GM12878 (cell line): ENCODE measurements at regions of chr13 and their contacts with region 1.

Region 1: DNA sequence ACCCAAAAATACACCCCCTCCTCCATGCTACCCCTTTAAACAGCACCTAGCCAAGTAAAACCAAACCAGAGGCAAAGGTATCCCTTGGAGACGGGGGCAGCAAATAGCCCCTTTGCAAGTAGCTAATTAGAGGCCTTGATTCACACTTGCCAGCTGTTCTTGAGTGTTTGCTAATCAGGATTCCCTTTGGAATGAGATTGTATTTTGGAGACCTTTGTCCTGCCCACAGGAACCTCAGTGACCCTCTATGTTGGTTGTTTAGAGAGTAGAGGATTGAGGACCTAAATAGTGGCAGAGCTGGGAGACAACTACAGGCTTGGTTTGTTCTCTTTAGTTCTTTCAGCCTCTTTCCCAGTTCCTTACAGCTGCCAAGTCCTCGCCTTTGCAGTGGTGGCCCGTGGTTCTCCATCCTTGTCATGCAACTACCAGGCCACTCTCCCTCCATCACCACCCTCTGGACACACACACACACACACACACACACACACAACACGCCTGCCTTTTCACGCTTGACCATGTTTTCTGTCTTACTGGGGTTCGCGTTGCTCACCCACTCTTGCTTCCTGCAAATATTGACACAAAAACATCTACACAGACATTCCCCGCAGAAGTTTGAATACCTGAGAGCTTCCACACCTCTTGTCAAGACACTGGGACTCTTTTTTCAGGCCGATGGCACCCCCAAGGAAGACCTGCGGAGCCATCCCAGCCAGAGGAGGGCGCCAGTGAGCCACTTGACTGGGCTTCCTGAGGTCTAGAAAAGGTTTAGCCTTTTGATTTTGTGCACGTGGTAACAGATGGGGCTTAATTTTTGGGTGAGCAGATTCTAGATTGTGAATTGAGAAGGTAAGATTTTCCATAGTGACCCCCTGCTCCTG is 80.0 kb upstream of the GPR183 start:
- DNase-seq: peak; percentile 66
- ATAC-seq: peak; percentile 93
- H3K4me3 ChIP-seq: no peak overlapping the region
- H3K27ac ChIP-seq: peak overlapping the region; percentile 41; the same call in 1 of the 2 replicates
- H3K4me1 ChIP-seq: peaks cover 26% of the 10 kb centered on the region
- H3K27me3 ChIP-seq: no peaks in the 10 kb centered on the region
- CTCF ChIP-seq: peak; percentile 95 to 99 (median 96)
- EP300 ChIP-seq: no peak
- POLR2A ChIP-seq: no peak
- RAD21 ChIP-seq: peak; percentile 99

Region 2: GRCh38 chr13:99176309-99177276 is 210.6 kb before region 1 on chr13:
- CTCF ChIA-PET with region 1: interaction called, 17 read pairs
- POLR2A ChIA-PET with region 1: no interaction called
- RAD21 ChIA-PET with region 1: no interaction called
- SMC1A ChIA-PET with region 1: interaction called, 8 read pairs
- in situ Hi-C with region 1: no loop called
- intact Hi-C with region 1: loop called (anchors 2 kb)
- DNase-seq: no peak
- ATAC-seq: peak; percentile 96
- H3K4me3 ChIP-seq: no peak overlapping the region
- H3K27ac ChIP-seq: no peak overlapping the region
- H3K4me1 ChIP-seq: peaks cover 4% of the 10 kb centered on the region
- H3K27me3 ChIP-seq: peaks cover 0 to 2% of the 10 kb centered on the region in 2 experiments; a peak in 1 of 4 replicates
- CTCF ChIP-seq: peak; percentile 84 to 96 (median 93)
- EP300 ChIP-seq: no peak
- POLR2A ChIP-seq: no peak
- RAD21 ChIP-seq: peak; percentile 99

Region 3: GRCh38 chr13:99307648-99308339 is 79.4 kb before region 1 on chr13:
- CTCF ChIA-PET with region 1: interaction called, 21 read pairs
- POLR2A ChIA-PET with region 1: no interaction called
- RAD21 ChIA-PET with region 1: interaction called, 13 read pairs
- SMC1A ChIA-PET with region 1: interaction called, 21 read pairs
- in situ Hi-C with region 1: no loop called
- intact Hi-C with region 1: no loop called
- DNase-seq: no peak
- ATAC-seq: peak; percentile 50
- H3K4me3 ChIP-seq: peak overlapping the region; percentile 98
- H3K27ac ChIP-seq: peak overlapping the region; percentile 93
- H3K4me1 ChIP-seq: peaks cover 49% of the 10 kb centered on the region
- H3K27me3 ChIP-seq: no peaks in the 10 kb centered on the region
- CTCF ChIP-seq: no peak
- EP300 ChIP-seq: no peak
- POLR2A ChIP-seq: no peak; the same call in 1 of the 2 replicates
- RAD21 ChIP-seq: no peak

Region 4: GRCh38 chr13:99366075-99366987 is 20.8 kb before region 1 on chr13:
- CTCF ChIA-PET with region 1: interaction called, 40 read pairs
- POLR2A ChIA-PET with region 1: interaction called, 12 read pairs
- RAD21 ChIA-PET with region 1: interaction called, 46 read pairs
- SMC1A ChIA-PET with region 1: interaction called, 148 read pairs
- in situ Hi-C with region 1: no loop called
- intact Hi-C with region 1: no loop called
- DNase-seq: peak; percentile 87
- ATAC-seq: peak; percentile 67
- H3K4me3 ChIP-seq: peak overlapping the region; percentile 23; the same call in 1 of the 2 replicates
- H3K27ac ChIP-seq: peak overlapping the region; percentile 93
- H3K4me1 ChIP-seq: peaks cover 54% of the 10 kb centered on the region
- H3K27me3 ChIP-seq: no peaks in the 10 kb centered on the region
- CTCF ChIP-seq: no peak
- EP300 ChIP-seq: peak; percentile 51 to 78; a peak in 1 of 4 replicates
- POLR2A ChIP-seq: 0 out of 2 replicates have a peak, but pooled peaks have one; percentile 19
- RAD21 ChIP-seq: peak; percentile 5; the same call in 1 of the 2 replicates

Region 5: GRCh38 chr13:99417201-99418102 is 30.3 kb after region 1 on chr13:
- CTCF ChIA-PET with region 1: interaction called, 55 read pairs
- POLR2A ChIA-PET with region 1: interaction called, 3 read pairs
- RAD21 ChIA-PET with region 1: interaction called, 22 read pairs
- SMC1A ChIA-PET with region 1: interaction called, 51 read pairs
- in situ Hi-C with region 1: no loop called
- intact Hi-C with region 1: no loop called
- DNase-seq: no peak
- ATAC-seq: no peak
- H3K4me3 ChIP-seq: no peak overlapping the region
- H3K27ac ChIP-seq: no peak overlapping the region
- H3K4me1 ChIP-seq: peaks cover 40% of the 10 kb centered on the region
- H3K27me3 ChIP-seq: no peaks in the 10 kb centered on the region
- CTCF ChIP-seq: no peak
- EP300 ChIP-seq: no peak
- POLR2A ChIP-seq: no peak
- RAD21 ChIP-seq: no peak

Region 6: DNA sequence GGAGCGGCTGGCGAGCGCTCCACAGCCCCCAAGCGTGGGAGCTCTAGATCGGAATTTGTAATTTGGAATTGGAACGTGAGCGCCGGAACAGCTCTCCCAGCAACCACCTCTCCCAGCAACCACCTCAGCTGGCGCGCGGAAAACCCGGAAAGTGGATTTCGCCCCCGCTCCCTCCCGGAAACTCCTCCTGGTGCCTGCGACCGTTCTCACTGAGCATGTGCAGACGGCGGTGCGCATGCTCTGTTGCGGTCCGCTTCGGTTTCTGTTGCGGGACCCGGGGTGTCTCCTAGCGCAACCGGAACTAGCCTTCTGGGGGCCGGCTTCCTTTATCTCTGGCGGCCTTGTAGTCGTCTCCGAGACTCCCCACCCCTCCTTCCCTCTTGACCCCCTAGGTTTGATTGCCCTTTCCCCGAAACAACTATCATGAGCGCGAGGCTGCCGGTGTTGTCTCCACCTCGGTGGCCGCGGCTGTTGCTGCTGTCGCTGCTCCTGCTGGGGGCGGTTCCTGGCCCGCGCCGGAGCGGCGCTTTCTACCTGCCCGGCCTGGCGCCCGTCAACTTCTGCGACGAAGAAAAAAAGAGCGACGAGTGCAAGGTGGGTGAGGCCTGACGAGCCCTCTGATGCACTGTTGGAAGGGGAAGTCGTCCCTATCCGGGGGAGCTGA is 114.2 kb after region 1 on chr13 and contains the start of gene TM9SF2:
- CTCF ChIA-PET with region 1: interaction called, 19 read pairs
- POLR2A ChIA-PET with region 1: interaction called, 3 read pairs
- RAD21 ChIA-PET with region 1: interaction called, 10 read pairs
- SMC1A ChIA-PET with region 1: interaction called, 12 read pairs
- in situ Hi-C with region 1: no loop called
- intact Hi-C with region 1: no loop called
- DNase-seq: peak; percentile 90
- ATAC-seq: peak; percentile 72
- H3K4me3 ChIP-seq: peak within 1 kb of the TSS; percentile 93
- H3K27ac ChIP-seq: peak within 1 kb of the TSS; percentile 91
- H3K4me1 ChIP-seq: peaks cover 12% of the 10 kb centered on the region
- H3K27me3 ChIP-seq: no peaks in the 10 kb centered on the region
- CTCF ChIP-seq: no peak
- EP300 ChIP-seq: no peak
- POLR2A ChIP-seq: peak; percentile 77
- RAD21 ChIP-seq: no peak
- polyA plus RNA-seq, gene TM9SF2: 34.6 to 42.5 TPM